Naive thymus-derived CD8-positive, alpha-beta T cell (primary cell): ENCODE measurements at regions of chr11 and their contacts with region 1.

Region 1: GRCh38 chr11:61361686-61362541 is at the starts of genes CYB561A3 and TMEM138:
- DNase-seq: peak; percentile 77 to 91 (median 82)
- ATAC-seq: peak; percentile 86 to 92
- H3K4me3 Mint-ChIP-seq: peak within 1 kb of the TSS; percentile 95 to 99 (median 97)
- H3K27ac Mint-ChIP-seq: peak within 1 kb of the TSS; percentile 95 to 99 (median 98)
- H3K4me1 Mint-ChIP-seq: peaks cover 7 to 60% (median 37%) of the 10 kb centered on the region in 4 donors
- H3K27me3 Mint-ChIP-seq: no peaks in the 10 kb centered on the region
- polyA plus RNA-seq, gene CYB561A3: 54.5 to 69.3 (median 58.4) TPM
- polyA plus RNA-seq, gene TMEM138: 44.8 to 49.7 (median 47.0) TPM

Region 2: GRCh38 chr11:61384271-61385242 is 22.6 kb after region 1 on chr11:
- POLR2A ChIA-PET with region 1: interaction called, 21 read pairs
- DNase-seq: no peak
- ATAC-seq: no peak
- H3K4me3 Mint-ChIP-seq: no peak overlapping the region
- H3K27ac Mint-ChIP-seq: no peak overlapping the region
- H3K4me1 Mint-ChIP-seq: peaks cover 0 to 9% (median 6%) of the 10 kb centered on the region in 4 donors
- H3K27me3 Mint-ChIP-seq: no peaks in the 10 kb centered on the region

Region 3: DNA sequence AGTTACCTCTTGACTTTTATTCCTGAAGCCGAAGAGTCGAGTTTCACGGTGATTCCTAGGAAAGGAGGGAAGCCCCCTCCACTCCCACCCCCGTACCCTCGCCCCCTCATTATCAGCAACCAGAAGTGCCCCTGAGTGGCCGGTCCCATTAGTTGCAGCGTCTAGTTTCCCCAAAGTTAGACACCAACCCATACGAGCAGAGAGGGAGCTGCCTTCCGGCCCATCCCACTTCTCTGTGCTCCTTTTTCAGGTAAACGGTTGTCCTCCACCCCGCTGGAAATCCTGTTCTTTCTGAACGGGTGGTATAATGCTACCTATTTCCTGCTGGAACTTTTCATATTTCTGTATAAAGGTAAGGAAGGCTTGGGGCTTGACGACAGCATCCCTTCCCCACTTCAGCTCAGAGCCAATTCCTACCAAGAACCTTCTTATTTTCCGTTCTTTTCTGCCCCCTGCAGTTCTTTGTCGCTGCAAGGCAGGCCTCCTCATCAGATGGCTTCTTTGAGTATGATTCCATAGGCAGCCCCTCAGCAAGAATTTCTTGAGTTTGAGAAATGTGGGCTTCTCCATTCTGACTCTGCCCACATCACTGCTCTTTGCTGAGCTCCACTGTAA is 31.2 kb after region 1 on chr11:
- POLR2A ChIA-PET with region 1: interaction called, 46 read pairs
- DNase-seq: peak in 5 of 10 donors; percentile 10 to 43 (median 32)
- ATAC-seq: peak; percentile 54 to 59
- H3K4me3 Mint-ChIP-seq: peak overlapping the region; percentile 90 to 98 (median 96)
- H3K27ac Mint-ChIP-seq: peak overlapping the region; percentile 94 to 99 (median 98)
- H3K4me1 Mint-ChIP-seq: peaks cover 12 to 35% (median 26%) of the 10 kb centered on the region in 4 donors
- H3K27me3 Mint-ChIP-seq: no peaks in the 10 kb centered on the region

Region 4: GRCh38 chr11:61429691-61430582 is 68.0 kb after region 1 on chr11 and contains the starts of genes CPSF7 and SDHAF2:
- POLR2A ChIA-PET with region 1: interaction called, 36 read pairs
- DNase-seq: peak; percentile 95 to 98 (median 97)
- ATAC-seq: peak; percentile 89
- H3K4me3 Mint-ChIP-seq: peak within 1 kb of the TSS; percentile 93 to 99 (median 96)
- H3K27ac Mint-ChIP-seq: peak within 1 kb of the TSS; percentile 98 to 100 (median 99)
- H3K4me1 Mint-ChIP-seq: peaks cover 18 to 81% (median 70%) of the 10 kb centered on the region in 4 donors
- H3K27me3 Mint-ChIP-seq: no peaks in the 10 kb centered on the region
- polyA plus RNA-seq, gene CPSF7: 20.6 to 34.8 (median 26.0) TPM
- polyA plus RNA-seq, gene SDHAF2: 92.1 to 118 (median 97.8) TPM